Left cardiac atrium (tissue), 4 donors: ENCODE measurements at regions of chr15 and their contacts with region 1.

Region 1: DNA sequence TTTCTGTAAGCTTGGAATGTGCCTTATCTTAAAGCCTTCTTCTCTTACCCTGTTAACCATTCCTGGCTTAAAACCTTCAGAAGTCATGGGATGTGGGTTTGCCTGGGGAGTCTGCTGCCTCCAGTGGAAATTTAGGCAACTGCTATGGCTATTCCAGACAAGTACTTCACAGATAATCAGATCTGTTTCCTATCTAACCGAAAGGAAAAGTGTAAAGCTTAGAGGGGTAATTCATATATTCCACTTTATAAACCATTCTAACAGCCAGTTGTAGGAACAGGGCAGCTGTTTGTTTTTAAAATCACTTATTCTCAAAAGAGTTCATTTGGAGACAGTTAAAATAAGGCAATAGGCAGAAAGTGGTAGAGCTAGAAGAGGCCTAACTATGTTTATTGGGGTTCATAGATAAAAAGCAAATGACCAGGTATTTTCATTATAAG is 219.9 kb downstream of the TCF12 start:
- DNase-seq: no peak
- ATAC-seq: peak; percentile 86 to 92

Region 2: GRCh38 chr15:56821721-56822425 is 316.5 kb before region 1 on chr15:
- intact Hi-C with region 1: loop called in 1 of 2 experiments (anchors 10 kb)
- DNase-seq: peak; percentile 36
- ATAC-seq: peak; percentile 76 to 88

Region 3: GRCh38 chr15:56918046-56918938 is 220.1 kb before region 1 on chr15 and contains the start of gene TCF12:
- intact Hi-C with region 1: loop called (anchors 10 kb)
- DNase-seq: peak; percentile 96
- ATAC-seq: peak; percentile 95 to 98
- total RNA-seq, gene TCF12: 44.0 to 53.9 TPM

Region 4: DNA sequence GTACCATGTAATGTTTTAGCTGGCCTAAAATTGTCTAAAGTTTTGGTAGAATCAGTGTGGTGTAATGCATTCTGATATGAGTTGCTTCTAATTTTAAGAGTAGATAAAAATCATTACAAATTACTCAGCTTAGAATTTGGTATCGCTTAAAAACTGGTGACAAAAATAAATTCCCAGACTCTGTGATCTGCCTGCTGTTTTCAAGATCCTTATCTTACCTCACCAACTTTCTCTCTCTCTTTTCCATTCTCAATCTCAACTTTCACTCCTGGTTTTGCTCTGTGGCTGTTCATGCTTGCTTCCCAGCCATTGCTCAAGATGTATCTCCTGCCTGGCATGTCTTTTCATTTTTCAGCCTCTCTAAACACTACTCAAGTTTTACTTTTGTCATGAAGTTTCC is 174.2 kb before region 1 on chr15:
- intact Hi-C with region 1: no loop called
- DNase-seq: no peak
- ATAC-seq: peak in 1 of 2 donors; percentile 23

Region 5: GRCh38 chr15:57172925-57173324 is 34.6 kb after region 1 on chr15:
- intact Hi-C with region 1: no loop called
- DNase-seq: no peak
- ATAC-seq: peak in 1 of 2 donors; percentile 38

Region 6: DNA sequence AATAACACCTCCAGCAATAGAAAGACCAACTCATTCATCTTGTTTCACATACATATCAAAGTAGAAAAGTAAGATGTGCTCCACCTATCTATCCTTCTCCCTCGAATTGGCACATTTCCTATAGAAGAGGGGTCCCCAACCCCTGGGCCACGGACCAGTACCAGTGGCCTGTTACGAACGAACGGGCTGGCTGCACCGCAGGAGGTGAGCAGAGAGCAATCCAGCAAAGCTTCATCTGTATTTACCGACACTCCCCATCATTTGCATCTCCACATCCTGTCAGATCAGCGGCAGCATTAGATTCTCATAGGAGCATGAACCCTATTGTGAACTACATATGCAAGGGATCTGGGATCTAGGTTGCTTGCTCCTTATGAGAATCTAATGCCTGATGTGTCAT is 143.0 kb after region 1 on chr15:
- intact Hi-C with region 1: no loop called
- DNase-seq: no peak
- ATAC-seq: no peak